Naive thymus-derived CD4-positive, alpha-beta T cell (primary cell): ENCODE measurements at regions of chr1 and their contacts with region 1.

Region 1: GRCh38 chr1:117605774-117606648 is at the start of gene TENT5C:
- DNase-seq: peak; percentile 98 to 99 (median 99)
- ATAC-seq: peak; percentile 97
- H3K4me3 ChIP-seq: peak within 1 kb of the TSS; percentile 79
- H3K4me3 Mint-ChIP-seq: peak within 1 kb of the TSS; percentile 94 to 100 (median 98)
- H3K27ac ChIP-seq: peak within 1 kb of the TSS; percentile 86
- H3K27ac Mint-ChIP-seq: peak within 1 kb of the TSS; percentile 96 to 99 (median 97)
- H3K4me1 ChIP-seq: peaks cover 20 to 22% of the 10 kb centered on the region in 2 donors
- H3K4me1 Mint-ChIP-seq: peaks cover 25 to 44% (median 32%) of the 10 kb centered on the region in 7 donors
- H3K27me3 ChIP-seq: no peaks in the 10 kb centered on the region
- H3K27me3 Mint-ChIP-seq: peaks cover 0 to 42% (median 0%) of the 10 kb centered on the region in 5 donors
- total RNA-seq, gene TENT5C: 3.7 to 47.0 (median 12.9) TPM

Region 2: DNA sequence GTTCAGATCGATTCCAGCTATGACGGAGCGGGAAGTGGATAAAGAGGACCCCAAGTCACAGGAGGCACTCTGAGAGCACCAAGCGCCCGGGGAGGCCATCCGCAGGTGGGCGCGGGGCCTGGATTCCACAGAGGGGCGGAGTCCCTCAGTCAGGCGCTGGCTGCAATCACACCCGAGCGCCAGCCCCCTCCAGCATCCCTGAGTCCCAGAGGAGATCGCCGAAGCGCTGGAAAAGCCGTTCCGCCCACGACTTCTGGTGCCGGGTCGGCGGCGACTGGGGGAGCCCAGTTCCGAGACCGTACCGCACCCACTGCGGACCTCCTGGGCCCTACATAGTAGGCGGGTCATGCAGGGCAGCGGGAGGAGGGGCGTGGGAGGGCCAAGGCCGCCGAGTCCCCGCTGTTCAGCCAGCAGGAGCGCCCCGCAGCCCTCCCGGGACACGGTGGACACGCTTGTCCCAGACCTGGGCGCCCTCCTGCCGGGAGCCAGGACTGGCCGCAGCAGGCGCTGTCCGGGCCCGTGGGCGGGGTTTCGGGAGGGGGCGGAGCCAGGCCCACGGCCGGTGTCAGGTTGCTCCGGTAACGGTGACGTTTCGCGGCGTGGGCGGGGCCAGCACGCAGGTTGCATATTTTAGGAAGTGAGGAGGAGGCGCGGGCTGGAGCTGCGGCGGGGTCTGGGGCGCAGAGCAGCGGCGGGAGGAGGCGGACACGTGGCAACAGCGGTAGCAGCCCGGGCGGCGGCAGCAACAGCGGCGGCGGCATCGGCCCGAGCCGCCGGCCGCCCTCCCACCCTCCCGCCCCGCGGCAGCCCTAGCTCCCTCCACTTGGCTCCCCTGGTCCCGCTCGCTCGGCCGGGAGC is 1233.2 kb before region 1 on chr1 and contains the start of gene ATP1A1:
- CTCF ChIA-PET with region 1: no interaction called
- POLR2A ChIA-PET with region 1: no interaction called
- intact Hi-C with region 1: loop called in 1 of 2 experiments (anchors 5 kb)
- DNase-seq: peak; percentile 94 to 99 (median 96)
- ATAC-seq: peak; percentile 89
- H3K4me3 ChIP-seq: peak within 1 kb of the TSS; percentile 94
- H3K4me3 Mint-ChIP-seq: peak within 1 kb of the TSS; percentile 91 to 99 (median 98)
- H3K27ac ChIP-seq: peak within 1 kb of the TSS; percentile 98
- H3K27ac Mint-ChIP-seq: peak within 1 kb of the TSS; percentile 89 to 98 (median 96)
- H3K4me1 ChIP-seq: peaks cover 18 to 20% of the 10 kb centered on the region in 2 donors
- H3K4me1 Mint-ChIP-seq: peaks cover 15 to 54% (median 35%) of the 10 kb centered on the region in 7 donors
- H3K27me3 ChIP-seq: no peaks in the 10 kb centered on the region
- H3K27me3 Mint-ChIP-seq: peaks cover 0 to 29% (median 0%) of the 10 kb centered on the region in 5 donors
- total RNA-seq, gene ATP1A1: 228 to 315 (median 287) TPM

Region 3: GRCh38 chr1:116763787-116764465 is 842.1 kb before region 1 on chr1:
- CTCF ChIA-PET with region 1: interaction called, 5 read pairs
- POLR2A ChIA-PET with region 1: no interaction called
- intact Hi-C with region 1: loop called in 1 of 2 experiments (anchors 5 kb)
- DNase-seq: peak in 2 of 9 donors; percentile 64 to 66
- ATAC-seq: peak; percentile 10
- H3K4me3 ChIP-seq: peak overlapping the region; percentile 17
- H3K4me3 Mint-ChIP-seq: peak overlapping the region; percentile 79 to 99 (median 85)
- H3K27ac ChIP-seq: peak overlapping the region; percentile 89
- H3K27ac Mint-ChIP-seq: peak overlapping the region; percentile 93 to 100 (median 97)
- H3K4me1 ChIP-seq: peaks cover 94 to 100% of the 10 kb centered on the region in 2 donors
- H3K4me1 Mint-ChIP-seq: peaks cover 74 to 100% (median 94%) of the 10 kb centered on the region in 7 donors
- H3K27me3 ChIP-seq: no peaks in the 10 kb centered on the region
- H3K27me3 Mint-ChIP-seq: no peaks in the 10 kb centered on the region

Region 4: DNA sequence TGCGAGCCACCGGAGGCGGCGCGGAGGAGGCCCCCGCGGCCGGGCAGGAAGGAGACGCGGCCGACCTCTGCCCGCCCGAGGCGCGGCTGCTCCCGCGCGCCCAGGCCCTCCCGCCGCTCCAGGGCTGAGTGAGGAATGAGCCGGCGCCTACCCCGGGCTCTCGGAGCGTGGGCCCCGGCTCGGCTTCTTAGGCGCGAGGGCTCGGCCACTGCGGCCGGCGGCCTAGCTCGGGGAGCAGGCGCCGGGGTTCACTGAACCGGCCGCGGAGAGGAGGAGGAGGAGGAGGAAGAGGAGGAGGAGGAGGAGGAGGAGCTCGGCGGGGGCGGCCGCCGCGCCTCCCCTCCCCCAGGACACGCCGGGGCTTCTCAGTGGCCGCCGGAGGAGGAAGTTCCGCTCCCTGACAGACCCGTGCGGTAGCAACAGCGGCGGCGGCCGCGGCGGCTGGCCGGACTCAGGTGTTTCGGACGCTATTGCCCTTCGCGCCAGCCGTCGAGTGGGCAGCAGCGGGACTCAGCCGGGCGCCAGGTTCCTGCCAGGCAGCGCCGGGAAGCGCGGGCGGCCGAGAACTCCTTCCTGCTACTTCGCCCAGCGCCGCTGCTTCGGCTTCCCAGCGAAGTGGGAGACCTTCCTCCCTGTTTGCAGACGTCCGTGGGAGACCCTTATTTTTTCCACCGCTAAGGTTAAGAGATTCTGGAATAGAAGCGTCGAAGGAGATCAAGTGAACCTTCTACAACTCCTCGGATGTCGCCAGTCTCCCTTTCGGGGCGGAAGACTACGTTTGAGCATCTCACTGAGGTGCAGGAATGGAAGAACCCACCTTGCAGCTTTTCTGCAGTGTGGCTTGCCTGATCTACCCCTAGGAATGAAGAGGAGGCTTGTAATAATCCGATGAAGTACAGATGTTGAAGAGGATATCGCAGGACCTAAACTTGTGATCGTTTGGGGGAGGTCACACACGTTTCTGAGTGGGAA is 238.7 kb before region 1 on chr1 and contains the start of gene MAN1A2:
- CTCF ChIA-PET with region 1: no interaction called
- POLR2A ChIA-PET with region 1: interaction called, 5 read pairs
- intact Hi-C with region 1: loop called (anchors 1 kb)
- DNase-seq: peak in 7 of 9 donors; percentile 59 to 79 (median 75)
- ATAC-seq: peak; percentile 78
- H3K4me3 ChIP-seq: peak within 1 kb of the TSS; percentile 83
- H3K4me3 Mint-ChIP-seq: peak within 1 kb of the TSS; percentile 92 to 98 (median 95)
- H3K27ac ChIP-seq: peak within 1 kb of the TSS; percentile 91
- H3K27ac Mint-ChIP-seq: peak within 1 kb of the TSS; percentile 92 to 99 (median 97)
- H3K4me1 ChIP-seq: peaks cover 23 to 44% of the 10 kb centered on the region in 2 donors
- H3K4me1 Mint-ChIP-seq: peaks cover 46 to 82% (median 73%) of the 10 kb centered on the region in 7 donors
- H3K27me3 ChIP-seq: no peaks in the 10 kb centered on the region
- H3K27me3 Mint-ChIP-seq: no peaks in the 10 kb centered on the region
- total RNA-seq, gene MAN1A2: 40.4 to 63.4 (median 47.1) TPM

Region 5: GRCh38 chr1:117654493-117655219 is 48.6 kb after region 1 on chr1:
- CTCF ChIA-PET with region 1: interaction called, 10 read pairs
- POLR2A ChIA-PET with region 1: interaction called, 42 read pairs
- intact Hi-C with region 1: loop called (anchors 1 kb)
- DNase-seq: peak in 3 of 9 donors; percentile 31 to 47 (median 37)
- ATAC-seq: no peak
- H3K4me3 ChIP-seq: peak overlapping the region; percentile 2
- H3K4me3 Mint-ChIP-seq: peak overlapping the region; percentile 58 to 81 (median 70)
- H3K27ac ChIP-seq: no peak overlapping the region
- H3K27ac Mint-ChIP-seq: peak overlapping the region in 7 of 9 donors; percentile 33 to 93 (median 84)
- H3K4me1 ChIP-seq: peaks cover 65 to 92% of the 10 kb centered on the region in 2 donors
- H3K4me1 Mint-ChIP-seq: peaks cover 68 to 83% (median 78%) of the 10 kb centered on the region in 7 donors
- H3K27me3 ChIP-seq: no peaks in the 10 kb centered on the region
- H3K27me3 Mint-ChIP-seq: peaks cover 0 to 45% (median 14%) of the 10 kb centered on the region in 5 donors

Region 6: DNA sequence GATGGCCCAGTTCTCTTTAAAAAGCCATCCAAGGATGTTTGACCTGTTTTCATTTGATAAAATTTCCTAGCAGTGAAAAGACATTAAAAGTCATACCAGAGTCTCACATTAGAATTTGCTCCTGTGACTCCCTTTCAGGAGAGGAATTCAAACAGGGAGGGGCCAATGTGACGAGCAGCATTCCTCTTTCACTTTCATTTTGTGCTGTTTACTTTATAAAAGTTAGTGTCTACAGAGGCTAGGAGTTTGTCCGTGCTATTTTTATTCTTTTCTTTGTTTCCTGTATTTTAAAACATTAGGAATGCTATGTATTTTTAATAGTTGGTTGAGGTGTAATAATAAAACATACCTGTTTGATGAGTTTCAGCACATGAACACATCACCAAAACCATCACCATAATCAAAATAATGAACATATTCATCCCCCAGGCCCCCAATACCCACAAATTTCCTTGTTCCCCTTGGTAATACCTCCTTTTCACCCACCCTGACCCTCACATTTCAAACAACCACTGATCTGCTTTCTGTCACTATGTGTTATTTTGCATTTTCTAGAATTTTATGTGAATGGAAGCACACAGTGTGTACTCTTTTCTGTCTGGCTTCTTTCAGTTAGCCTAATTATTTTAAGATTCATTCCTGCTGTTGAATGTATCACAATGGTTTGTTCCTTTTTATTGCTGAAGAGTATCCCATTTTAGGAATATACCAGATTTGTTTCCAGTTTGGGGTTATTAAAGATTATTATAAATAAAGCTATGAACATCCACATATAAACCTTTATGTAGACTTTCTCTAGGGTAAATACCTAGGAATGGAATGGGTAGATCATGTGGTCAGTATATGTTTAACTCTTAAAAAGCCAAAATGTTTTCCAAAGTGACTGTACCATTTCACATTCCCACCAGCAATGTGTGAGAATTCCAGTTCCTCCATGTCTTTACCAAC is 129.3 kb after region 1 on chr1:
- CTCF ChIA-PET with region 1: no interaction called
- POLR2A ChIA-PET with region 1: no interaction called
- intact Hi-C with region 1: loop called (anchors 1 kb)
- DNase-seq: peak in 7 of 9 donors; percentile 19 to 53 (median 44)
- ATAC-seq: peak; percentile 58
- H3K4me3 ChIP-seq: peak overlapping the region; percentile 59
- H3K4me3 Mint-ChIP-seq: peak overlapping the region; percentile 67 to 90 (median 81)
- H3K27ac ChIP-seq: peak overlapping the region; percentile 66
- H3K27ac Mint-ChIP-seq: peak overlapping the region; percentile 83 to 97 (median 92)
- H3K4me1 ChIP-seq: peaks cover 6 to 11% of the 10 kb centered on the region in 2 donors
- H3K4me1 Mint-ChIP-seq: peaks cover 14 to 23% (median 19%) of the 10 kb centered on the region in 7 donors
- H3K27me3 ChIP-seq: no peaks in the 10 kb centered on the region
- H3K27me3 Mint-ChIP-seq: peaks cover 0 to 11% (median 0%) of the 10 kb centered on the region in 5 donors

Region 7: DNA sequence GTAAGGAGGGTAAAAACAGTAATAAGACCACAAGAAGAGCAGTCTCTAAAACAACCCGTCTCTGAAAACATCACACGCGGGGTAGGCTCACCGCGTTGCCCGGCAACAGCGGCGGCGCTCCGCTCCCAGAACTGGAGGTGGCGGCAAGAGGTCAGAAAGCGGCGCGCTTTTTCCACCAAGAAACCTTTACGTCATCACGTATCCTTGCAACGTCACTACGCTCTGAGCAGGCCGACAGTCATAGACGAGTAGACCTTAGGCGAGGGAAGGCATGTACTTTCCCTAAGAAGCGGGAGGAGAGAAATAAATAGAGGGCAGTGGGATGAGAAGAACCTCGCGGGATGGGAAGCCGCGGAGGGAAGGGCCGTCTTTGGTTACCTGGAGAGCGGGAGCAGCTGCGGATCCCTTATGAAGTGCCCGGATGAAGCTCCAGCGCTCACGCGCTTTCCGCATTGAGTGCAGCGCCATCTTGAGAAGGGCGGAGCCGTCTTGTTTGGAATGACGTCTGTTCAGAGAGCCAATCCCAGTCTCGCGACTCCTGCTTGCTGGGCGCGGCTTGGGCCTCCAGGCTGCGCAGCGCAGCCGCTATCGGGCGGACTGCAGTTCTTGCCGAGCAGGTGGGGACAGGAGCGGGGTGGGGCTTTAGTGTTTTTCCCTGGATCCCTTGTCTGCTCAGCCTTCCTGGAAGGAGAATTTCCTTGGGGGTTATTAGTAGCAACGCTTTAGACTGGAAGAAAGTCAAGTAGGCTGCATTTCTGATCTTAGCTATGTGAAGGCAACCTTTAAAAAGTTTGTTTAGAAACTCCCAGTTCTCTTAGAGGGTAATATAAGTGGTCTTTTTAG is 1534.4 kb after region 1 on chr1 and contains the start of gene WARS2:
- CTCF ChIA-PET with region 1: no interaction called
- POLR2A ChIA-PET with region 1: no interaction called
- intact Hi-C with region 1: loop called in 1 of 2 experiments (anchors 5 kb)
- DNase-seq: peak; percentile 78 to 97 (median 97)
- ATAC-seq: peak; percentile 93
- H3K4me3 ChIP-seq: peak within 1 kb of the TSS; percentile 97
- H3K4me3 Mint-ChIP-seq: no peak within 1 kb of the TSS
- H3K27ac ChIP-seq: peak within 1 kb of the TSS; percentile 98
- H3K27ac Mint-ChIP-seq: no peak within 1 kb of the TSS
- H3K4me1 ChIP-seq: peaks cover 12 to 25% of the 10 kb centered on the region in 2 donors
- H3K4me1 Mint-ChIP-seq: peaks cover 17 to 38% (median 27%) of the 10 kb centered on the region in 7 donors
- H3K27me3 ChIP-seq: no peaks in the 10 kb centered on the region
- H3K27me3 Mint-ChIP-seq: no peaks in the 10 kb centered on the region
- total RNA-seq, gene WARS2: 8.6 to 27.1 (median 12.9) TPM